Activated naive CD4-positive, alpha-beta T cell treated with anti-CD3 and anti-CD28 coated beads for 36 hours (primary cell): ENCODE measurements at regions of chr16 and their contacts with region 1.

Region 1: DNA sequence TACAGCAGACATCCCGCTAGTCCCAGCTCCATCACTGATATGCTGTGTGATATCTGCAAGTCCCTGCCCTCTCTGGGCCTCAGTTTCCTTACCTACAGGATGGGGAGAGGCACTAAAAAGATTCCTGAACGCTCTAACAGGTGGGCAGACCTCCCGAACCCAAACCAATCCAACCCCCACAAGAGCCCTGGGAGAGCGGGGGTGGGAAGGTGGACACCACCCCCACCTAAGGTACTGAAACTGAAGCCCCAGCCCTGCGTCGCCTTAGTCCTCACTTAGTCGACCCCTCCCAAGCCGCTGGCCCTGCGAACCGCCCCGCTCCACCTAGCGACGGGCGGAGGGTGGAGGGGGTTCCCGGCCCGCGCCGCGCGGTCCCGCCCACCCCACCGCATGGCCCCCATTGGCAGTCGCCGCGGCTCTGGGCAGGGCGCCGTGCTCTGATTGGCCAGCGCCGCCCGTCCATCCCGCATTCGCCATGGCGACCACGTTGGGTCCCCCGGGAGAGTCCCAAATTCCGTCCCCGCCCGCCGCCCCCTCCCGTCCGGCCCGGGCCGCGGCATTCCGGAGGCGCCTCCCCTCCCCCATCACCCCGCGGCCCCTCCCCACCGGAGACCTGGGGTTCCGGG is 578 bp downstream of the CCDC102A start:
- DNase-seq: peak; percentile 97
- H3K4me3 Mint-ChIP-seq: peak overlapping the region; percentile 85
- H3K27ac Mint-ChIP-seq: peak overlapping the region; percentile 88
- H3K4me1 Mint-ChIP-seq: peaks cover 70% of the 10 kb centered on the region
- H3K27me3 Mint-ChIP-seq: no peaks in the 10 kb centered on the region

Region 2: DNA sequence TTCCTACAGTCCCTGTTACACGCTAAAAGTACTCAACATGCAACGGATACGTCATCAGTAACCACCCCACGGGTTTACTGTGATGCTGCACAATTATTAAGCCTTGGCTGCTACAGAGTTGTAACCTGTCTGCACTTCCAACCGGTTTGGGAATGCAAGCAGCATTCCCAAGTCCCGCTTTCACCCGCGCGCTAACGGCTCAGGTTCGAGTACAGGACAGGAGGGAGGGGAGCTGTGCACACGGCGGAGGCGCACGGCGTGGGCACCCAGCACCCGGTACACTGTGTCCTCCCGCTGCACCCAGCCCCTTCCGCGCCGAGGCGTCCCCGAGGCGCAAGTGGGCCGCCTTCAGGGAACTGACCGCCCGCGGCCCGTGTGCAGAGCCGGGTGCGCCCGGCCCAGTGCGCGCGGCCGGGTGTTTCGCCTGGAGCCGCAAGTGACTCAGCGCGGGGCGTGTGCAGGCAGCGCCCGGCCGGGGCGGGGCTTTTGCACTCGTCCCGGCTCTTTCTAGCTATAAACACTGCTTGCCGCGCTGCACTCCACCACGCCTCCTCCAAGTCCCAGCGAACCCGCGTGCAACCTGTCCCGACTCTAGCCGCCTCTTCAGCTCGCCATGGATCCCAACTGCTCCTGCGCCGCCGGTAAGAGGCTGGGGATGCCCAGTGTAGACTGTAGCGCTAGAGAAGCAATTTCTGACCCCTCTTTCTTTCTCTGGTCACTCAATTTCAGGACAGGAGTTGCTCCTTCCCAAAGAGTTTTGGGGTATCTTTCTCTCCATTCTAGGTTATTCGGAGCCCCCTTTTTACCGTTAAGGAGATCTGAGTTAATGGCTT is 927.5 kb before region 1 on chr16 and contains the start of gene MT2A:
- CTCF ChIA-PET with region 1: no interaction called
- intact Hi-C with region 1: loop called (anchors 5 kb)
- DNase-seq: peak; percentile 94
- H3K4me3 Mint-ChIP-seq: peak within 1 kb of the TSS; percentile 88
- H3K27ac Mint-ChIP-seq: peak within 1 kb of the TSS; percentile 88
- H3K4me1 Mint-ChIP-seq: peaks cover 62% of the 10 kb centered on the region
- H3K27me3 Mint-ChIP-seq: no peaks in the 10 kb centered on the region
- total RNA-seq, gene MT2A: 95.7 to 130 TPM

Region 3: GRCh38 chr16:57128771-57129389 is 406.9 kb before region 1 on chr16:
- CTCF ChIA-PET with region 1: no interaction called
- intact Hi-C with region 1: loop called (anchors 10 kb)
- DNase-seq: peak; percentile 85
- H3K4me3 Mint-ChIP-seq: peak overlapping the region; percentile 43
- H3K27ac Mint-ChIP-seq: peak overlapping the region; percentile 87
- H3K4me1 Mint-ChIP-seq: peaks cover 84% of the 10 kb centered on the region
- H3K27me3 Mint-ChIP-seq: no peaks in the 10 kb centered on the region

Region 4: GRCh38 chr16:57289391-57290257 is 246.2 kb before region 1 on chr16:
- CTCF ChIA-PET with region 1: no interaction called
- intact Hi-C with region 1: no loop called
- DNase-seq: no peak
- H3K4me3 Mint-ChIP-seq: no peak overlapping the region
- H3K27ac Mint-ChIP-seq: peak overlapping the region; percentile 41
- H3K4me1 Mint-ChIP-seq: peaks cover 14% of the 10 kb centered on the region
- H3K27me3 Mint-ChIP-seq: no peaks in the 10 kb centered on the region

Region 5: GRCh38 chr16:57447186-57447962 is 88.4 kb before region 1 on chr16 and contains the starts of genes CIAPIN1 and COQ9:
- CTCF ChIA-PET with region 1: interaction called, 3 read pairs
- intact Hi-C with region 1: loop called (anchors 1 kb)
- DNase-seq: peak; percentile 96
- H3K4me3 Mint-ChIP-seq: peak within 1 kb of the TSS; percentile 86
- H3K27ac Mint-ChIP-seq: peak within 1 kb of the TSS; percentile 86
- H3K4me1 Mint-ChIP-seq: peaks cover 42% of the 10 kb centered on the region
- H3K27me3 Mint-ChIP-seq: no peaks in the 10 kb centered on the region
- total RNA-seq, gene CIAPIN1: 29.5 to 31.0 TPM
- total RNA-seq, gene COQ9: 30.6 TPM

Region 6: DNA sequence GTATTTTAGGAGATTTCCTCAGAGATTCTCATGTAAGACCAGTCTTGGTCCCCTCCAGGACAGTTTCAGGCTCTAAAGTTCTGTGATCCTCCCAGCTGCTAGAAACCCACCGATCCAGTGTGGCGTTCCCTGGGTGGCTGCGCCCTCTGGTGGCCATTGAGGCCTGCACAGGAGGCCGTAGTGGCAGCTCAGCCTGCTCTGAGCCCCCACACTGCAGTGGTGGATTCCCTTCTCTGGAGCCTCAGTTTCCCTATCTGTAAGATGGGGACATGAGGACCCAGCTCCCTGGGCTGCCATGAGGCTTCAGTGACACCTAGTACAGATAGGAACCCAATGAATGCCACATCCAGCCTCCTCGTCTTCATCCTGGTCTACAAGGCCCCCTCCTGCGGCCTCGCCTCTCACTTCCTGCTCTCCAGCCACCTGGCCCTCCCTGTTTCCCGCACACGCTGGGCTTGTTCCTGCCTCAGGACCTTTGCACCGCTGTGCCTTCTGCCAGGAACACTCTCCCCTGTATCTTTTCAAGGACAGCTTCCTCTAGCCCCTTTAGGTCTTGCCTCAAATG is 15.9 kb before region 1 on chr16:
- CTCF ChIA-PET with region 1: interaction called, 35 read pairs
- intact Hi-C with region 1: no loop called
- DNase-seq: peak; percentile 87
- H3K4me3 Mint-ChIP-seq: no peak overlapping the region
- H3K27ac Mint-ChIP-seq: peak overlapping the region; percentile 73
- H3K4me1 Mint-ChIP-seq: peaks cover 4% of the 10 kb centered on the region
- H3K27me3 Mint-ChIP-seq: no peaks in the 10 kb centered on the region

Region 7: GRCh38 chr16:57609541-57610401 is 74.0 kb after region 1 on chr16:
- CTCF ChIA-PET with region 1: no interaction called
- intact Hi-C with region 1: loop called (anchors 1 kb)
- DNase-seq: peak; percentile 92
- H3K4me3 Mint-ChIP-seq: peak overlapping the region; percentile 45
- H3K27ac Mint-ChIP-seq: peak overlapping the region; percentile 86
- H3K4me1 Mint-ChIP-seq: peaks cover 40% of the 10 kb centered on the region
- H3K27me3 Mint-ChIP-seq: no peaks in the 10 kb centered on the region

Region 8: DNA sequence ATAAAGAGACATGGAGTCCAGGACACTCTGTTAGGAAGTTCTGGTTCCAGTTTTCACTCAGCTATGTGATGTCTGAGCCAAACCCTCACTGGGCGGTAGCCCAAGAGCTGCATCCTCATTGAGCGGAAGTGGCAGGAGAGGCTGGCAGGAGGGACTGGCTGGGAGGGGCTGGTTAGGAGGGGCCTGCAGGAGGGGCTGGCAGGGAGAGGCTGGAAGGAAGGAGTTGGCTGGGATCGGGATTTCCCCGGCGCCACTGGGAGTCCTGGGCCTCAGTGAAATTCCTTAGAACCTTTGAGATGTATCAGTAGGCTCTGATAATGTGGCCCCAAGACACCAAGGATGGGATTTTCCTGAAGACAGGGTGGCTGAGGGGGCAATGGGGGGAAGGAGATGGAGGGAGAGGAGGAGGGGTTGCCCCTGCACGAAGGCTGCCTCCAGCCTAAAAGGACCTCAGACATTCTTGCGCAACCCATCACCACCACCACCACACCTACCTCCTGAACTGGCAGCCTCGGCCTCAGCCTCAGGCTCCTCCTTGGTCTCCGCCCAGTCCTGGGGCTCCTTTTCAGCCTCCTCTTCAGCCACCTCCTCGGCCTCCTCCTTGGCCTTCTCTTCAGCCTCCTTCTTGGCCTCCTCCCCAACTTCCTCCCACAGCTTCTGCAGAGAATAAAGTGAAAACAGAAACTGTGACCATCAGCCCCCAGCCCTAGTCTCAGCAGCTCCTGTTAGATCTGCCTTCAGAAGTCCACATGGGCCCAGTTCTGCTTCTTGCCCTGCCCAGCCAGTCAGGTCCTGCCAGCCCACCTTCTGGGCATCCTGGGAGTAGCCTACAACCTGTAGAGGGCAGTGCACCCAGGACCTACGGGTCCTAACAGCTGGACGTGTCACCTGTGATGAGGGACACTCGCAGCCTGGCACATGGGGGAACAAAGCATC is 403.4 kb after region 1 on chr16:
- CTCF ChIA-PET with region 1: no interaction called
- intact Hi-C with region 1: no loop called
- DNase-seq: no peak
- H3K4me3 Mint-ChIP-seq: no peak overlapping the region
- H3K27ac Mint-ChIP-seq: no peak overlapping the region
- H3K4me1 Mint-ChIP-seq: no peaks in the 10 kb centered on the region
- H3K27me3 Mint-ChIP-seq: no peaks in the 10 kb centered on the region

Region 9: DNA sequence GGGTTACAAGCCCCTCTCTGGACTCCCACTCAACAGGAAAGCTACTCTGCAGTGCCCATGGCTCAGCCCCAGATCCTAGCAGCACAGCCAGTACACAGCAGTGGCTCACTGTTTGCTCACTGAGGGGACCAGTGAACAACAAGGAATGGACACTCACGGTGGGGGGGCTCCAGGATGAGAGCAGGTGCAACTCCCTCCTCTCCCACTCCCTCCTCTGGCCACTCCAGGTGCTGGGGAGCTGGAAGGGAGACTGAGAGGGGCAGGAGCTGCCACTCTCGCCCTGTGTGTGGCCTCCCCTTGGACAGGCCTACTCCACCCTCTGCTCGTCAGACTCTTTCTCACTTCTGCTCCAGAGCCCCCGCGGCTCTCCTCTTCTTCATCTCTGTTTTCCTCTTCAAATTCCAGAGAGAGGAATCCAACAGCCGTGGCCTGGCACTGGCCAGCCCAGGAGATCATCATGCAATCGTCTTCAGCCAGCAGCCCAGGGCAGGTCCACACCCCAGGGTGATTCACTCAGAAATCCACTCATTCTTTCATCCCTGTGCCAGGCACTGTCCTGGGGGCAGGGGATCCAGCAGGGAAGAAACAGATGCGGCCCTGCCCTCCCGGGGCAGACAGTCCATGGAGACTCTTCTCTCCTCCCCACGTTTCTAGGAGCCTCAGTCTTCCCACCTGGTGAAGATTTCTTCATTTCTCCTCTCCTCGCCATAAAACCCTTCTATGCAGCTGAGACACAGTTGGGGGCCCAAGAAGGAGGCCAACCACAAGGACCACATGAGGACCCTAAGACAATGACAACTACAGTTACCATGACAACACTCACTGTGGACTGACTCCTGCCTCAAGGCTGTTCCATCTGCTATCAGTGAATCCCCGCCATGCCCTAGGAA is 562.7 kb after region 1 on chr16:
- CTCF ChIA-PET with region 1: no interaction called
- intact Hi-C with region 1: no loop called
- DNase-seq: no peak
- H3K4me3 Mint-ChIP-seq: no peak overlapping the region
- H3K27ac Mint-ChIP-seq: no peak overlapping the region
- H3K4me1 Mint-ChIP-seq: no peaks in the 10 kb centered on the region
- H3K27me3 Mint-ChIP-seq: no peaks in the 10 kb centered on the region